ENCODE measurements at regions of chr3 and their contacts with region 1.

Region 1: DNA sequence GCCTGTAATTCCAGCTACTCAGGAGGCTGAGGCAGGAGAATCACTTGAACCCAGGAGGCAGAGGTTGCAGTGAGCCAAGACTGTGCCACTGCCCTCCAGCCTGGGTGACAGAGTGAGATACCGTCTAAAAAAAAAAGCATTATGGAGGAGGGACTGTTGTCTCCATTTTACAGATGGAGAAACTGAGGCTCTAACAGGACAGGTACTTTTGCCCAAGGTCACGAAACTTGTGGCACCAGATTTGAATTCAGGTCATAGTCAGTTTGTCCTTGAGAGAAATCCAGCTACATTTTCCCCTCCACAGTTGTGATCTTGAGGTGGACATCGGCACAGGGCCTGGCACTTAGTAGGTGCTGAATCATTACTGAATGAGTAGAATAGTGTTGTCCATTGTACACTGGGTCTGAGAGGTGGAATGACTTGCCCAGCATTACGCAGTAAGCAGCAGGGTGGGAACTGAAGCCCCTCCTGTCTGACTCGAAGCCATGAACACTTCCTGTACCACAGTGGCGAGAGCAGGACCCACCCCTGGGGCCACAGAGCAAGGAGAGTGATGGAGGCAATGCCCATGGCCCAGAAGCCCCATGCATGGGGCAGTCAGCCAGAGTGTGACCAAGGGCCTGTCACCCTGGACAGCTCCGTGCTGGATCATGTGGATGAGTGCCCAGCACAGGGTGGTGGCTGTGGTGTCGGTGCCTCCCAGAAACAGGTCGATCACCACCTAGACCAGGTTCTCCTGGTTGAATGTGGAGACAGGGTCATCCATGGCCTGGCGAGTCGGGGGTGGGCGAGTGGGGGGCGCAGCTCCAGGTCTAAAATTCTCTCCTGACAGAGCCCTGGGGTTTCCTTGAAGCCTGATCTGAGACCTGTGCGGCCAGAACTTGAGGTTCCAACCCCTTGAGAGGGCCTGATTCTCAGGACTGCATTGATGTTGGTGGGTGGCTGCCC is 20.4 kb upstream of the PARL start:
- DNase-seq: no peak
- H3K4me3 ChIP-seq: no peak overlapping the region
- H3K27ac ChIP-seq: no peak overlapping the region
- H3K4me1 ChIP-seq: no peaks in the 10 kb centered on the region
- H3K27me3 ChIP-seq: no peaks in the 10 kb centered on the region
- CTCF ChIP-seq: no peak
- EP300 ChIP-seq: no peak
- POLR2A ChIP-seq: no peak

Region 2: GRCh38 chr3:184005941-184006507 is 100.9 kb after region 1 on chr3:
- intact Hi-C with region 1: loop called in 1 of 4 experiments (anchors 10 kb)
- DNase-seq: peak; percentile 16 to 51 (median 26)
- H3K4me3 ChIP-seq: no peak overlapping the region
- H3K27ac ChIP-seq: no peak overlapping the region
- H3K4me1 ChIP-seq: peaks cover 2% of the 10 kb centered on the region
- H3K27me3 ChIP-seq: no peaks in the 10 kb centered on the region
- CTCF ChIP-seq: no peak
- EP300 ChIP-seq: no peak
- POLR2A ChIP-seq: no peak

Measured in ovary (tissue), 10 donors.